BJ (cell line): ENCODE measurements at regions of chr1 and their contacts with region 1.

Region 1: GRCh38 chr1:2141036-2141435 is 53.5 kb downstream of the FAAP20 start:
- DNase-seq: no peak
- H3K4me3 ChIP-seq: no peak overlapping the region
- H3K27me3 ChIP-seq: no peaks in the 10 kb centered on the region; the same call in 1 of the 2 replicates
- CTCF ChIP-seq: no peak

Region 2: DNA sequence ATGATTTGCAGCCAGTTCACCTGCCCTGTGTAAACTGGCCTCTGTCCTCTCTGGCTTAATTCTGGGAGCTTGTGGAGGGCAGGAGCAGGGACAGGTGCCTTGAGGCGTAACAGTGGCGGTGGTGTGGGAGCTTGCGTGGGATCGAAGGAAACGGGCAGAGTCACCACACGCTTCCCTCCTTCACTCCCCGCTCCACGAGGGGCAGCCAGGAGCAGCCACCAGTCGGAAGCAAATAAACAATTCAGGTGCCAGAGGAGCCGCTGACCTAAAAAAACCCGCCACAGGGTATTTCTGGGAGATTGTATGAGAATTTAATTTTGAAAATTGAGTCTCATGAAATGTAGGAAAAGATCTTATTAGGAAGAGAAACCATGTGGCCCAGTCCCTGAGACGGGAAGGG is 27.5 kb after region 1 on chr1:
- CTCF ChIA-PET with region 1: interaction called, 31 read pairs
- POLR2A ChIA-PET with region 1: no interaction called
- DNase-seq: no peak
- H3K4me3 ChIP-seq: no peak overlapping the region
- H3K27me3 ChIP-seq: no peaks in the 10 kb centered on the region; the same call in 1 of the 2 replicates
- CTCF ChIP-seq: no peak